Transverse colon (tissue), 4 donors: ENCODE measurements at regions of chr9 and their contacts with region 1.

Region 1: DNA sequence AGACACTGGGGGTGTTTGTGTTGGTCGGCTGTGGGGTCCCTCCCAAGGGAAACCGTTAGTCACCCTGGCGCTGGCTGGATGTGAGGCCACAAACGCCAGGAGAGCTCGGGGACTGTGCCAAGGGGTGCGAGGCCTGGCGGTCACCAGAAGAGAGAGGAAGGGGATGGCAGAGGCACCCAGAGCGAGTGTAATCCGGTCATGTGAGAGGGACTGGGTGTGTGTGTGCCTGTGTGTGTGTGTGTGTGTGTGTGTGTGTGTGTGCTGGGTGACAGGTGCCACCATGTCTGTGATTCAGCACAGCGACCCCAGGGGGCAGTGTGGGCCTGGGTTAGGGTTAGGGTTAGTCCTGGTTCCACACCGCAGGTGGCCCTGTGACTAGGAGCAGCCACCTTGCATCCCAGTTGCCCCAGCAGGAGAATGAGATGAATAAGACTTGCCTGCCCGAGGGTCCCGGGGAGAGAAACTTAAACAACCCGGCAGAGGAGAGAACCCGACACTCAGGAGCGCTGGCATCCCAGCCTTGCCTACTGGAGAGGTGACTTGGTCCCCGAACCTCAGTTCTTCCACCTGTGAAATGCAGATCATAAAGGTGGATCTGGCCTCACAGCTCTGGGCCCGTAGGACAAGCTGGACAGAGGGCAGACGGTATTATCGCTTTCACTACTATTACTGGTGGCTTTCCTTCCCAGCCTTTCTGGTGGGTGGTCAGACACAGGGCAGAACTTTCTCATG is 1.4 kb upstream of the ADAMTSL2 start:
- DNase-seq: peak; percentile 86
- H3K4me3 ChIP-seq: no peak overlapping the region
- H3K27ac ChIP-seq: no peak overlapping the region
- H3K4me1 ChIP-seq: peaks cover 14 to 29% (median 18%) of the 10 kb centered on the region in 4 donors
- H3K27me3 ChIP-seq: peaks cover 31% of the 10 kb centered on the region
- CTCF ChIP-seq: peak; percentile 43 to 85 (median 55)
- EP300 ChIP-seq: no peak
- POLR2A ChIP-seq: no peak

Region 2: DNA sequence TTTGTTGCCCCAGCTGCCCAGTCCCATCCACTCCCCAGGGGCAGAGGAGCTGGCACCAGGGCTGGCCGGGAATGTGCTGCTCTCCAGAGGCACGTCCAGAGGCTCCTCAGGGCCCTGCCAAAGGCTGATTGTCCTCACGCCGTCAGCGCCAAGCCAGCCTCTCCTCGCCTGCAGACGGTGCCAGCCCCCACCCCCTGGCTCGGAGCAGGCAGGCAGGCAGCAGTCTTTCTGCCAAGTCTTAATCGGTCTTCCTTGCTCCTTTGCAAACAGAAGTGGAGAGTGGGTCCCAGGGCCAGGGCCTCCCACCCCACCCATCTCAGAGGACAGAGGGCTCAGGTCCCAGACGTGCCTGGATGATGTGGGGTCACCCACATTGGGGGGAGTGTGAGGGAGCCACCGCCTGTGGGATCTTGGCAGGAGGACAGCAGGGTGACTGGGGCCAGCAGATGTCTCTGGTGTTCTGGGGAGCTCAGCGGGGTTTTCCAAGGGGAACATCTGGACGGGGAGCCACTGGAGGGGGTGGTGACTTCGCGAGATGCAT is 39.8 kb after region 1 on chr9:
- in situ Hi-C with region 1: no loop called
- intact Hi-C with region 1: loop called (anchors 1 kb)
- DNase-seq: peak; percentile 43
- H3K4me3 ChIP-seq: no peak overlapping the region
- H3K27ac ChIP-seq: peak overlapping the region in 1 of 4 donors; percentile 20
- H3K4me1 ChIP-seq: peaks cover 0 to 18% (median 4%) of the 10 kb centered on the region in 4 donors
- H3K27me3 ChIP-seq: peaks cover 8% of the 10 kb centered on the region
- CTCF ChIP-seq: no peak
- EP300 ChIP-seq: no peak
- POLR2A ChIP-seq: no peak

Region 3: DNA sequence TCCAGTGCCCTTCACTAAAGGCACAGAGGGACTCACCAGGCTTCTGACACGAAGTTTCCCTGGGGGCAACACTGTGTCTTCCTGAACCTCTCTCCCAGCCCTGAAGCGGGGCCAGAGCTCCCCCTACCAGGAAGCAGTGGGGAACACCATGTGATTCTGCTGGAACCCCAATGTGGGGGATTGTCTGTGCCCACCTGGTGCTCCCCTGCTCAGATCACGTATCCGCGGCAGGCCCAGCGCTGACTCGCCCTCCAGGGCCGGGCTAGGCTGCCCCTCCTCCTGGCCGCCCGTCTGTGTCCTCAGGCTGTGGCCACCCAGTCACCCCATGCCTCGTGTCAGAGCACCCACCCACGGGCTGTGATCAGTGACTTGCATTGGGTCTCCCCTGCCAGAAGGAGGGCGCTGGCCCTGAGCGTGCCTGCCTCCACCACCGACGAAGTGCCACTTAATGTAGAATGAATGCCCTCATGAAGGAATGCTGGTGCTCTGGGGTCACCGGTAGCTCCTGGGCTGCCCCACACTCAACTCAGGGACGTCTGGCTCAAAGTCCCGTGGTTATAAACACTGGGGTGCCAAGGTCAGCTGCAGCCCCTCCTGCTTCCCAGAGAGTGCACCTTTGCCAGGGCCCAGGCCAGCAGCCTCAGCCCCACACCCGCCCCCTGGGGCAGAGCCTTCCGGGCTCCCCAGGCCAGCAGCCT is 182.9 kb after region 1 on chr9:
- in situ Hi-C with region 1: loop called in 2 of 4 experiments (anchors 10 to 25 kb)
- intact Hi-C with region 1: no loop called
- DNase-seq: no peak
- H3K4me3 ChIP-seq: no peak overlapping the region
- H3K27ac ChIP-seq: peak overlapping the region in 2 of 4 donors; percentile 19 to 21
- H3K4me1 ChIP-seq: no peaks in the 10 kb centered on the region
- H3K27me3 ChIP-seq: peaks cover 3% of the 10 kb centered on the region
- CTCF ChIP-seq: peak in 1 of 5 experiments; percentile 10
- EP300 ChIP-seq: no peak
- POLR2A ChIP-seq: no peak

Region 4: GRCh38 chr9:133726401-133727276 is 193.5 kb after region 1 on chr9:
- in situ Hi-C with region 1: loop called in 2 of 4 experiments (anchors 10 to 25 kb)
- intact Hi-C with region 1: loop called (anchors 5 kb)
- DNase-seq: peak; percentile 47
- H3K4me3 ChIP-seq: no peak overlapping the region
- H3K27ac ChIP-seq: no peak overlapping the region
- H3K4me1 ChIP-seq: no peaks in the 10 kb centered on the region
- H3K27me3 ChIP-seq: no peaks in the 10 kb centered on the region
- CTCF ChIP-seq: peak; percentile 22 to 51 (median 47)
- EP300 ChIP-seq: no peak
- POLR2A ChIP-seq: no peak